Activated naive CD4-positive, alpha-beta T cell treated with anti-CD3 and anti-CD28 coated beads for 36 hours (primary cell): ENCODE measurements at regions of chr7 and their contacts with region 1.

Region 1: DNA sequence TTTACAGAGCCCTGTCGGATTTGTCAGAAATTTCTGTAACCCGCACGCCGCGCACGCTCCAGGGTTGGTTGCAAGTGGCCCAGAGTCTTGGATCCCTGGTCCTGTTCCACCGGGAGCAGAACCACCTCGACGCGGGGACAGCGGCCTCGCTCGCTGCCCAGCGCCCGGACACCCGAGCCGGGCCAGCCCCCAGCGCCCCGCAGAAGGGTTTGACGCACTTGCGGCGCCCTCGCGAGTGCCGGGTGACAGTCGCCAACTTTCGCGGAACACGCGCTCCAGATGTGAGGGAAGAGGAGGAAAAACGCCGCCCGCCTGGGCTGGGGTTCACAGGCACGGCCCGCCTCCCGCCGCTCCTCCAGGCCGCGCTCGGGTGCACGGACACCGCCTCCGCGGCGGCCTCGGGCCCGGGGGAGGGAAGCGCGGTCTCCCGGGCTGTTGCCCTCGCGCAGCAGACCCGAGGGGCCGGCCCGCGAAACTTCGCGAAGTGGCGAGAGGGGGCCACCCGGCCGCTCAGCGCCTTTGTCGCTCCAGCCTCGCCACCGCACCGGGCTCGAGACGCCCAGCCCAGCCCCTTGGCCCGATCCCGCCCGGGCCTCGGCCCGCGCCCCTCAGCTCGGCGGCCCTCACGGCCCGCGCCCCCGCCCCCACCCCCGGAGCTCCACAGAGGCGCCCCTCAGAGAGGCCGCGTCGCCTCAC is 514 bp downstream of the RNF216 start:
- DNase-seq: peak; percentile 57
- H3K4me3 Mint-ChIP-seq: peak overlapping the region; percentile 84
- H3K27ac Mint-ChIP-seq: peak overlapping the region; percentile 78
- H3K4me1 Mint-ChIP-seq: peaks cover 42% of the 10 kb centered on the region
- H3K27me3 Mint-ChIP-seq: no peaks in the 10 kb centered on the region

Region 2: GRCh38 chr7:5532520-5533335 is 248.2 kb before region 1 on chr7:
- CTCF ChIA-PET with region 1: no interaction called
- intact Hi-C with region 1: loop called (anchors 1 kb)
- DNase-seq: peak; percentile 79
- H3K4me3 Mint-ChIP-seq: peak overlapping the region; percentile 91
- H3K27ac Mint-ChIP-seq: peak overlapping the region; percentile 98
- H3K4me1 Mint-ChIP-seq: peaks cover 22% of the 10 kb centered on the region
- H3K27me3 Mint-ChIP-seq: no peaks in the 10 kb centered on the region

Region 3: GRCh38 chr7:5831196-5831595 is 50.2 kb after region 1 on chr7:
- CTCF ChIA-PET with region 1: interaction called, 4 read pairs
- intact Hi-C with region 1: loop called (anchors 2 kb)
- DNase-seq: no peak
- H3K4me3 Mint-ChIP-seq: no peak overlapping the region
- H3K27ac Mint-ChIP-seq: no peak overlapping the region
- H3K4me1 Mint-ChIP-seq: peaks cover 41% of the 10 kb centered on the region
- H3K27me3 Mint-ChIP-seq: no peaks in the 10 kb centered on the region

Region 4: DNA sequence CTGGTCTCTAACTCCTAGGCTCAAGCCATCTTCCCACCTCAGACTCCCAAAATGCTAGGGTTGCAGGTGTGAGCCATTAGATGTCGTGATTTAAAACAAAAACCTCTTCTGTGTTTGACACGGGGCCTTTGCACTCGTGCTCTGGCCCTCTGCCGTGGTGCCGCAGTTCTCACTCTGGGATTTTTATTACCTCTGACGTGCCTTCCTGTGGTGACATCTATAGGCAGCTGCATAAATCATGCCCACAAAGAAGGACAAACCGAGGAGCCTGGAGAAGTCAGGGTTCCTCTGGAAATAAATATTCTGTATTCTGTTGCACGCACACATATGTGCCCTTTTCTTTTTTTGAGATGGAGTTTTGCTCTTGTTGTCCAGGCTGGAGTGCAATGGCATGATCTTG is 73.8 kb after region 1 on chr7:
- CTCF ChIA-PET with region 1: no interaction called
- intact Hi-C with region 1: no loop called
- DNase-seq: no peak
- H3K4me3 Mint-ChIP-seq: no peak overlapping the region
- H3K27ac Mint-ChIP-seq: no peak overlapping the region
- H3K4me1 Mint-ChIP-seq: peaks cover 14% of the 10 kb centered on the region
- H3K27me3 Mint-ChIP-seq: no peaks in the 10 kb centered on the region

Region 5: GRCh38 chr7:6106140-6106904 is 325.4 kb after region 1 on chr7:
- CTCF ChIA-PET with region 1: no interaction called
- intact Hi-C with region 1: no loop called
- DNase-seq: peak; percentile 58
- H3K4me3 Mint-ChIP-seq: peak overlapping the region; percentile 82
- H3K27ac Mint-ChIP-seq: peak overlapping the region; percentile 82
- H3K4me1 Mint-ChIP-seq: peaks cover 33% of the 10 kb centered on the region
- H3K27me3 Mint-ChIP-seq: no peaks in the 10 kb centered on the region

Region 6: DNA sequence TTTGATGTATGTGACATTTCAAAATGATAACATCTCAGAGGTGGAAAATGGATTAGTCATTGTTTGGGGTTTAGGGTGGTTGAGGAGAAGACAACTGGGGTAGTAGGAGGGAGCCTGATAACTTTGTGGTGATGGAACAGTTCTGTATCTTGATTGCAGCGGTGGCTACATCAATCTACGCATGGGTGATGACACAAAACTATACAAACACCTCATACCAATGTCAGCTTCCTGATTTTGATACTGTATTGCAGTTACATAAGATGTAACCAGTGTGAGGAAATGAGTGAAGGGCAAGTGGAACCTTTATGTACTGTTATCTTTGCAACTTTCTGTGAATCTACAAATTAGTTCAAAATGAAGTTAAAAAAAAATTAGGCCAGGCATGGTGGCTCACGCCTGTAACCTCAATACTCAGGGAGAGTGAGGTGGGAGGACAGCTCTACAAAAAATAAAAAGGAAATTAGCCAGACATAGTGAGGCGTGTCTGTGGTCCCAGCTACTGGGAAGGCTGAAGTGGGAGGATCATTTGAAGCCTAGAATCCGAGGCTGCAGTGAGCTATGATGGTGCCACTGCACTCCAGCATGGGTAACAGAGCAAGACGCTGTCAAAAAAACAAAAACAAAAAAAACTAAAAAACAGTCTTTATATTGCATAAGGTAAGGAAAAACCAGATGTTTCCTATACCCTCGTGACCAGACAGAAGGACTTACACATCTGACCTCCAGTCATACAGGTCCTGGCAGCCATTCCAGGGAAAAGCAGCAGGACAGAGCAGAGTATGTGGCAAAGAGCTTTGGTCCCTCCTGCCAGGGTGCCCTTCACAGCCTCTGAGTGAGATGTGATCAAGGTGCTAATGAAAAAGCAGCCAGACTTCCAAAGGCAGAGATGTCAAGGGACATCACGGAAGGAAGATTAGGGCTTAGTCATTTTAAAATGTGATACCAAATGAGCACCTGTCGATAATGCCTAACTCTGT is 440.7 kb after region 1 on chr7:
- CTCF ChIA-PET with region 1: no interaction called
- intact Hi-C with region 1: no loop called
- DNase-seq: peak; percentile 57
- H3K4me3 Mint-ChIP-seq: peak overlapping the region; percentile 3
- H3K27ac Mint-ChIP-seq: peak overlapping the region; percentile 55
- H3K4me1 Mint-ChIP-seq: peaks cover 17% of the 10 kb centered on the region
- H3K27me3 Mint-ChIP-seq: no peaks in the 10 kb centered on the region